ENCODE measurements at regions of chr16 and their contacts with region 1.

Region 1: GRCh38 chr16:67159593-67160406 is at the starts of genes FBXL8 and TRADD:
- DNase-seq: peak; percentile 78
- H3K4me3 Mint-ChIP-seq: peak within 1 kb of the TSS; percentile 88
- H3K27ac Mint-ChIP-seq: peak within 1 kb of the TSS; percentile 91
- H3K4me1 Mint-ChIP-seq: peaks cover 47% of the 10 kb centered on the region
- H3K27me3 Mint-ChIP-seq: peaks cover 24% of the 10 kb centered on the region
- total RNA-seq, gene FBXL8: 13.8 to 15.3 TPM
- total RNA-seq, gene TRADD: 17.7 to 21.1 TPM

Region 2: DNA sequence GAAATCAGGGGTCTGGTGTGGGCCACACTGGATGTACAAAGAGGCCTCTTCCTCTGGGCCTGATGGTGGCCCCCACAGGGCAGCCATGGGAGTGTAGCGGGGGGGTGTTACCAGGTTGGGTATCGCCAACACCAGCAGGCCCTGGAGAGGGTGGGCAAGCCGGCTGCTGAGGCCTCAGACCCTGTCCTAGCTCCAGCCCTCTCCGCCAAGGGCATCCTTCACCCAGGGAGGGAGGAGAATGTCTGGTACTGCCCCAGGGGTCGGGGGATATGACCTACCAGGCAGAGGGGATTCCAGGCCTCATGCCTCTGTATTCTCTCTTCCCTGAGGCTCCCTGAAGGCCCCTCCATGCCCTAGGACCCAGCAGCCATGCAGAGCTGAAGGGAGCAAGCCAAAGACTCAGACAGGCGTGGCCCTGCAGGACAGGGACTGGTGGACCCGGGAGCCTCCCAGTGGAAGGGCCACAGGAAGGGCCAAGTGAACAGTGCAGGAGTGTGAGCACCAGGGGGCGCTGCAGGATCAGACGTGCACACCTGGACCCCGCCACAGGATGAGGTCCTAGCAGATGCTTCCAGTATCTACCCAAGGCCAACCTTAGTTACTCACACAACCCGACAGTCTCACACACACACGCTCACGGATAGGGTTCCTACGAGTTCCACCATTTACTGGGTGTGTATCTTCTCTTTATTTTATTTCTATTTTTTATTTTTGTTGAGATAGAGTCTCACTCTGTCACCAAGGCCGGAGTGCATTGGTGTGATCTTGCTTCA is 182.3 kb before region 1 on chr16:
- CTCF ChIA-PET with region 1: interaction called, 24 read pairs
- intact Hi-C with region 1: loop called (anchors 1 kb)
- DNase-seq: peak; percentile 94
- H3K4me3 Mint-ChIP-seq: no peak overlapping the region
- H3K27ac Mint-ChIP-seq: no peak overlapping the region
- H3K4me1 Mint-ChIP-seq: peaks cover 23% of the 10 kb centered on the region
- H3K27me3 Mint-ChIP-seq: no peaks in the 10 kb centered on the region

Region 3: GRCh38 chr16:67028555-67029248 is 131.1 kb before region 1 on chr16 and contains the start of gene CBFB:
- CTCF ChIA-PET with region 1: interaction called, 8 read pairs
- intact Hi-C with region 1: loop called (anchors 2 kb)
- DNase-seq: peak; percentile 93
- H3K4me3 Mint-ChIP-seq: peak within 1 kb of the TSS; percentile 86
- H3K27ac Mint-ChIP-seq: peak within 1 kb of the TSS; percentile 91
- H3K4me1 Mint-ChIP-seq: peaks cover 38% of the 10 kb centered on the region
- H3K27me3 Mint-ChIP-seq: no peaks in the 10 kb centered on the region
- total RNA-seq, gene CBFB: 79.6 to 86.8 TPM

Region 4: DNA sequence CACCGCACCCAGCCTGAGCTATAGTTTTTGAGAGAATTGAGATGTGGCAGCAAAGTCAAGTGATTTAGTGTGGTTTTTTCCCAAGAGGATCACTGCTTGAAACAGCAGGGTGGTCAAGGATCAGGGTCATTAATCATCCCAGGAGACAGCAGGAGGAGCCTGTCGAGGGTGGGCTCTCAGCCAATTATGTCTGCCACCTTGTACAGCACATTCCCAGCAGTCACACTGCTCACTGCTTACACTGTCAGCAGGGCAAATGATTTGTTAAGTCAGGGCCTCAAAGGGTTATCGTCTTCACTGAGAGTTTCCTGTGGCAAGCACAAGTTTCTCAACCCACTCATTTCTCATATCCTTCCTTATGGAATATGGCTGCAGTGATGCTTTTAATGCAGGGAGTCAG is 22.2 kb before region 1 on chr16:
- CTCF ChIA-PET with region 1: interaction called, 11 read pairs
- intact Hi-C with region 1: no loop called
- DNase-seq: no peak
- H3K4me3 Mint-ChIP-seq: no peak overlapping the region
- H3K27ac Mint-ChIP-seq: no peak overlapping the region
- H3K4me1 Mint-ChIP-seq: no peaks in the 10 kb centered on the region
- H3K27me3 Mint-ChIP-seq: no peaks in the 10 kb centered on the region

Region 5: DNA sequence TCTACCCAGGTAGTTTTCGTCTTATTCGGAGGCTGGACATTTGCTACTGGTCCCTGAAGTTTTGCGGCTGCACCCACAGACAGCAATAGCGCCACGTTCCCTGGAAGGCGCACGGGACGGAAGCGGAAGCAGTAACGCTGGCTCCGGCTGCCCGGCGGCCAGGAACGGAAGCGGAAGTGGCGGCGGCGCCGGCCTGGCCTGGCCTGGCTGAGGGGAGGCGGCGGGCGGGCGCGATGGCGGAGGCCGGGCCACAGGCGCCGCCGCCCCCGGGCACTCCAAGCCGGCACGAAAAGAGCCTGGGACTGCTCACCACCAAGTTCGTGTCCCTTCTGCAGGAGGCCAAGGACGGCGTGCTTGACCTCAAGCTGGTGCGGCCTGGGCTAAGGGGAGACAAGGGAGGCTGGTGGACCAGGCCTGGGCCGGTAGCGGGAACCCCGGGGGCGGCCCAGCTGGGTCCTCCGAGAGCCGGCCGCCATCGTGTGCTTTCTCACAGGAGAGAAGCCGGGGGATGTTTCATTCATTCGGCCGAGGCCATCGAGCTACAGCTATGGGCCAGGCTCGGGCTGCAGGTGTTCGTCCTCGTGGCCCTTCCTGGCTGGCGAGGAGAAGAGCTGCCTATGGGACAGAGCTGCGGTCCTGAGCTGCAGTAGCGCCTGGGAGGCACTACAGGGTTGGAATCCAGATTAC is 32.3 kb after region 1 on chr16 and contains the start of gene E2F4:
- CTCF ChIA-PET with region 1: interaction called, 3 read pairs
- intact Hi-C with region 1: loop called (anchors 1 kb)
- DNase-seq: peak; percentile 91
- H3K4me3 Mint-ChIP-seq: peak within 1 kb of the TSS; percentile 86
- H3K27ac Mint-ChIP-seq: peak within 1 kb of the TSS; percentile 80
- H3K4me1 Mint-ChIP-seq: peaks cover 43% of the 10 kb centered on the region
- H3K27me3 Mint-ChIP-seq: no peaks in the 10 kb centered on the region
- total RNA-seq, gene E2F4: 65.1 to 66.5 TPM

Region 6: DNA sequence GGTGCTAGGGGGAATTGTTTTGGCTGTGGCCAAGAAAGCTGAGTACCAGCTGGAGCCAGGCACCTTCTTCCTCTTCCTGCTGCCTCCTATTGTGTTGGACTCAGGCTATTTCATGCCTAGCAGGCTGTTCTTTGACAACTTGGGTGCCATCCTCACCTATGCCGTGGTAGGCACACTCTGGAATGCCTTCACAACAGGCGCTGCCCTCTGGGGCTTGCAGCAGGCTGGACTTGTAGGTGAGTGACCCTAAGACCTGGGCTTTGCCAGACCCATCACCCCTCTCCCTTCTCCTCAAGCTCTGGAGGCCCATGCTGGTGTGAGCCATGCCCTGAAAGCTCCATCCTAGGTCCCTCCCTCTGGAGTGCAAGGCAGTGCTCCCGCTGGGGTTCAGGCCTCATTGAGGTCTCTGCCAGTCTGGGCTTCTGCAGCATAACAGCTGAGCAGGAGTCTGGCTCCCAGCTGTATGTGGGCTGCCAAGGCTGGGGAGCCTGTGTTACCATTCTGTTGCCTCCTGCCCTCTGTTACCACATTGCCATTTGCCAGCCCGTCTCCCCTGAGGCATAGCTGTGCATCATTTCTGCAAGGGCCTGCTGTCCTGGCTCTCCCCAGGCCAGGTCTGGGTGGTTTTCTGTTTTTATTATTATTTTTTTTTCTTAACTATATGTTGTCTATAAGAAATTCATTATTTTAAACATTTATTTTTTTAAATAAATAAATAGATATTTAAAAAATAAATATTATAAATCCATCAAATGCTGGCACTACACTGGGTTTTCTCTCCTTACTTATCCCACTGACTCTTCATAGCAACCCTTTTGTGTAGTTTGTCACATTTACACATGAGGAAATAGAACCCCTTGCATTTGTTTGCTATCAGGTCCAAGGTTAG is 93.1 kb after region 1 on chr16:
- CTCF ChIA-PET with region 1: no interaction called
- intact Hi-C with region 1: no loop called
- DNase-seq: no peak
- H3K4me3 Mint-ChIP-seq: no peak overlapping the region
- H3K27ac Mint-ChIP-seq: no peak overlapping the region
- H3K4me1 Mint-ChIP-seq: peaks cover 17% of the 10 kb centered on the region
- H3K27me3 Mint-ChIP-seq: peaks cover 12% of the 10 kb centered on the region

Region 7: GRCh38 chr16:67311607-67312488 is 152.0 kb after region 1 on chr16:
- CTCF ChIA-PET with region 1: interaction called, 4 read pairs
- intact Hi-C with region 1: loop called (anchors 1 kb)
- DNase-seq: peak; percentile 98
- H3K4me3 Mint-ChIP-seq: peak overlapping the region; percentile 13
- H3K27ac Mint-ChIP-seq: peak overlapping the region; percentile 96
- H3K4me1 Mint-ChIP-seq: peaks cover 44% of the 10 kb centered on the region
- H3K27me3 Mint-ChIP-seq: no peaks in the 10 kb centered on the region

Measured in activated naive CD4-positive, alpha-beta T cell treated with anti-CD3 and anti-CD28 coated beads for 36 hours (primary cell).